ENCODE measurements at regions of chr10 and their contacts with region 1.

Region 1: DNA sequence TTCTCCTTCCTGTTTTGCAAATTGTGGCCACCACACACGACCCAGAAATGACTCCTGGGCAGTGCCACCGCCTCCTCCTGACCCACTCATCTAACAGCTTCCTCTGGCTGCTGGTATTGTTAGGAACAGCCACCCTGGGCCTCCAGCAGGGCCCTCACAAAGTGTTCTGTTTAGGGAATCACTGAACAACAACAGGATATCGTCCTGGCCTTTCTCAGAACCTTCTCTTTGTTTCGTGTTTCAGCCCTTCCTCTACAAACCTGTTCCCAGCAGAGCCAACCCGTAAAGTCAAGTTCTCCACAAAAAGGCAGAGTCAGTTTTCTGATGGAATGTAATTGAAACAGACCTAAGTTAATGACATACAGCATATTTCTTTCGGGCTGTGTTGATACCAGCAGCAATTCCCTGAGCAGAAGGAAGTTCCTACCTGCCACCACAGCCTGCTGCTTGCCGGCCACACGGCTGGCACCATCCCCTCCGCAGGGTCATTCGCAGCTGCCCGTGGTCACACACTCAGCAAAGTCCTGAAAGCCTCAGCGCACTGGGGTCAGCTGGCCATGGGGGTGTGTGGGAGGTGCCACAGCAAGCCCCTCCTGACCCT is 91.7 kb upstream of the PITRM1 start:
- DNase-seq: no peak
- H3K4me3 ChIP-seq: no peak overlapping the region
- H3K27ac ChIP-seq: peak overlapping the region; percentile 40 to 84
- H3K4me1 ChIP-seq: no peaks in the 10 kb centered on the region
- H3K27me3 ChIP-seq: no peaks in the 10 kb centered on the region
- CTCF ChIP-seq: no peak
- POLR2A ChIP-seq: no peak

Region 2: GRCh38 chr10:3213208-3213607 is 51.1 kb before region 1 on chr10:
- intact Hi-C with region 1: loop called (anchors 5 kb)
- DNase-seq: no peak
- H3K4me3 ChIP-seq: no peak overlapping the region
- H3K27ac ChIP-seq: no peak overlapping the region
- H3K4me1 ChIP-seq: no peaks in the 10 kb centered on the region
- H3K27me3 ChIP-seq: no peaks in the 10 kb centered on the region
- CTCF ChIP-seq: no peak
- POLR2A ChIP-seq: no peak

Region 3: DNA sequence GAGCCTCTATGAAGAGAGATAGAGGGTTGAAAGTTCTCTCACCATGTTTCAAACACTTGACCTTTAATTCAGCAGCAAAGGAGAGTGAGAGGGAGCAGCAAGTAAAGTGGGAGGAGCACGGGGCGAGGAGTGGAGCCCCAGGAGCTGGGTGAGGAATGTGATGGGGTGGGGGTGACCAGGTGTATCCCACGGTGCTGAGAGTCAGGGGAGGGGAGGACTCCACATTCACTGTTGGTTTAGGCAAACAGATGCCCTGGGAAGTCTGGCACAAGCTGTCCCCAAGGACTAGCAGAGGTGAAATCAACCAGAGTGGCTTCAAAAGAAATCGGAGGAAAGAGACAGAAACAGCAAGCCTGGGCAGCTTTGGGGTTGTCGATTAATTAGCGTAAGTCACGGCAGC is 10.2 kb after region 1 on chr10:
- intact Hi-C with region 1: no loop called
- DNase-seq: no peak
- H3K4me3 ChIP-seq: no peak overlapping the region
- H3K27ac ChIP-seq: no peak overlapping the region
- H3K4me1 ChIP-seq: no peaks in the 10 kb centered on the region
- H3K27me3 ChIP-seq: no peaks in the 10 kb centered on the region
- CTCF ChIP-seq: no peak
- POLR2A ChIP-seq: no peak

Measured in breast epithelium (tissue), 4 donors.